MCF 10A (cell line): ENCODE measurements at regions of chr1 and their contacts with region 1.

Region 1: GRCh38 chr1:222909586-222909985 is 94.7 kb downstream of the DISP1 start:
- DNase-seq: peak; percentile 78
- H3K4me3 Mint-ChIP-seq: no peak overlapping the region
- H3K27ac Mint-ChIP-seq: no peak overlapping the region
- H3K4me1 Mint-ChIP-seq: peaks cover 19% of the 10 kb centered on the region
- H3K27me3 Mint-ChIP-seq: no peaks in the 10 kb centered on the region
- CTCF ChIP-seq: no peak

Region 2: GRCh38 chr1:221809031-221810029 is 1100.3 kb before region 1 on chr1:
- CTCF ChIA-PET with region 1: no interaction called
- POLR2A ChIA-PET with region 1: no interaction called
- intact Hi-C with region 1: no loop called
- DNase-seq: no peak
- H3K4me3 Mint-ChIP-seq: no peak overlapping the region
- H3K27ac Mint-ChIP-seq: peak overlapping the region; percentile 22
- H3K4me1 Mint-ChIP-seq: peaks cover 20% of the 10 kb centered on the region
- H3K27me3 Mint-ChIP-seq: no peaks in the 10 kb centered on the region
- CTCF ChIP-seq: no peak

Region 3: DNA sequence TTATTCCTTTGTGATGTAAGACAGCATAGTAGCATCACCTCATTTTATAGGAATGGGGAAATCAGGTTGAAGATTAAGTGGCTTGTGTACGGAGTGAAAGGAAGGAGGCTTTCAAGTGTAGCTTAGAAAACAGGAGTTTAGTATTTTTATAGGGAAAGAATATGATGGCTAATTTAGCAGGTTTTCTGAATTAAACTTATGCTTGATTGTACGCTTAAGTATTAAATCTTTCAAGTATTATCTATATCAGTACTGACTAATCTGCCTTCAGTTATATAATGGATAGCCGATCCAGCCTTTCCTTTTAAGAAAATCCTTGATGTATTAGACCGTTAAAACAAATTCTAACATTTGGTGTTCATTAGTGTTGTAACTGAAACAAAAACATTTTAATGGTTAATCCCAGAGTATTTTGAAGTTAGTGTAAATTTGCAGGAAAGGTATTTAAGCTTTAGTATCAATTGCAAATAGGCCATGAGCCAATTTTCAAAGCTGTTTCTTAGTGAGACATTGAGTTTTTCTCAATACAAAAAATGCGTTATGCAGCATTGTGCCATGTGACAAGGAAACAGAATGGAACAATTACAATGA is 65.3 kb before region 1 on chr1:
- CTCF ChIA-PET with region 1: no interaction called
- POLR2A ChIA-PET with region 1: no interaction called
- intact Hi-C with region 1: no loop called
- DNase-seq: no peak
- H3K4me3 Mint-ChIP-seq: no peak overlapping the region
- H3K27ac Mint-ChIP-seq: no peak overlapping the region
- H3K4me1 Mint-ChIP-seq: no peaks in the 10 kb centered on the region
- H3K27me3 Mint-ChIP-seq: no peaks in the 10 kb centered on the region
- CTCF ChIP-seq: no peak

Region 4: DNA sequence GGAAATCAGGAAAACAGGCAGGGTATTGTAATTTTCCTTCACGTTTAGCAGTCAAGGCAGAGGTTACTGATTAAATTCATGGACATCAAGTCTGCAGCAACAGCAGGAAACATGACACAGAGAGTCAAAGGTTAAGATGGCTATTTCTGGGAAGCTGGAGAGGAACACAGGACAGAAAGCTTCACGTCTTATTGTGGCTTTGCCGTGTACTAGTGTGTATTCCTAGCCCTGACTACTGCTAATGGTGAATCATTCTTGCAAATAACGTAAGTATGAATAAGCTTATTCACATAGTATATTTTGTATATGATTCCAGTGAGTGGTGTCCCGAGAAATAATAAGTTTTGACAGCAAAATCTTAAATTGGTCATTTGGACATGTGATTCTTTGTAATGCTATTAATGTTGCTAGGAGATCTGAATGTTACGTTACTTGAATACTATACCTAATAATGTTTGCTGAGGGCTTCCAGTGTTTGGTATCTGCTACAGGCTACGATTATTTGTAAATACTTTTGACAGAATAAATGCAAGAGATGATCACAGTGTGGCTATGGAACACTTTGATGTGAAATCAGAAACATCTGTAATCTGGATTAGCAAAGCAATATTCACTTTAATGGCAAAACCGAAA is 17.3 kb before region 1 on chr1:
- CTCF ChIA-PET with region 1: no interaction called
- POLR2A ChIA-PET with region 1: interaction called, 20 read pairs
- intact Hi-C with region 1: no loop called
- DNase-seq: peak; percentile 72
- H3K4me3 Mint-ChIP-seq: no peak overlapping the region
- H3K27ac Mint-ChIP-seq: no peak overlapping the region
- H3K4me1 Mint-ChIP-seq: peaks cover 15% of the 10 kb centered on the region
- H3K27me3 Mint-ChIP-seq: no peaks in the 10 kb centered on the region
- CTCF ChIP-seq: no peak

Region 5: GRCh38 chr1:222928212-222928611 is 18.6 kb after region 1 on chr1:
- CTCF ChIA-PET with region 1: interaction called, 3 read pairs
- POLR2A ChIA-PET with region 1: interaction called, 11 read pairs
- intact Hi-C with region 1: no loop called
- DNase-seq: no peak
- H3K4me3 Mint-ChIP-seq: no peak overlapping the region
- H3K27ac Mint-ChIP-seq: no peak overlapping the region
- H3K4me1 Mint-ChIP-seq: no peaks in the 10 kb centered on the region
- H3K27me3 Mint-ChIP-seq: no peaks in the 10 kb centered on the region
- CTCF ChIP-seq: no peak